HEK293T (cell line): ENCODE measurements at regions of chr3 and their contacts with region 1.

Region 1: DNA sequence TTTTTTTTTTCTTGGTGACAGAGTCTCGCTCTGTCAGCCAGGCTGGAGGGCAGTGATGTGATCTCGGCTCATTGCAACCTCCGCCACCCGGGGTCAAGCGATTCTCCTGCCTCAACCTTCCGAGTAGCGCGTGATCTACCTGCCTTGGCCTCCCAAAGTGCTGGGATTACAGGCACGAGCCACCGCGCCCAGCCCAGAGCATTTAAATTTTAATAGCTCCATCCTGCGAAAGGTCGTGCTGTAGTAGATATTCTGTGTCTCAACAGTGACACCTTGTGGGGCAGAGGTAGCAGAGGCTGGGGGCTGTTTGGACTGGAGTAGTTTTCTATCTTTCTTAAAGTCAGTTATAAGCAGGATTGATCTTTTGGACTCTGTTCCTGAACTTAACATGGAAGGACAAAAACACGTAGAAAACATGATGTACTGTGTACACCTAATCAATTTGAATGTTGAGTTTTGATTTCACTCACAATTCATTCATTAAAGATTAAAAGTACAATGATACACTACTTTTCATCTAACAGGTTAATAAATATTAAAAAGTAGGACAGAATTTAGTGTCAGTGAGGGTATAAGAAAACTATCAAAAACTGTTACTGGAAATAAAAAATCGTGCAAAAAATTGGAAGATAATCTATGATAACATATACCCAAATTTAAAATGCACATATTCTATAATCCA is 11.0 kb upstream of the PDCD6IP start:
- DNase-seq: peak; percentile 66

Region 2: GRCh38 chr3:33629219-33629618 is 158.2 kb before region 1 on chr3:
- CTCF ChIA-PET with region 1: interaction called, 14 read pairs
- POLR2A ChIA-PET with region 1: interaction called, 4 read pairs
- DNase-seq: no peak

Region 3: GRCh38 chr3:33645060-33645647 is 142.3 kb before region 1 on chr3:
- CTCF ChIA-PET with region 1: interaction called, 10 read pairs
- POLR2A ChIA-PET with region 1: no interaction called
- DNase-seq: peak; percentile 56

Region 4: GRCh38 chr3:33798411-33799201 is 11.1 kb after region 1 on chr3 and contains the start of gene PDCD6IP:
- CTCF ChIA-PET with region 1: interaction called, 16 read pairs
- POLR2A ChIA-PET with region 1: interaction called, 15 read pairs
- DNase-seq: peak; percentile 94

Region 5: DNA sequence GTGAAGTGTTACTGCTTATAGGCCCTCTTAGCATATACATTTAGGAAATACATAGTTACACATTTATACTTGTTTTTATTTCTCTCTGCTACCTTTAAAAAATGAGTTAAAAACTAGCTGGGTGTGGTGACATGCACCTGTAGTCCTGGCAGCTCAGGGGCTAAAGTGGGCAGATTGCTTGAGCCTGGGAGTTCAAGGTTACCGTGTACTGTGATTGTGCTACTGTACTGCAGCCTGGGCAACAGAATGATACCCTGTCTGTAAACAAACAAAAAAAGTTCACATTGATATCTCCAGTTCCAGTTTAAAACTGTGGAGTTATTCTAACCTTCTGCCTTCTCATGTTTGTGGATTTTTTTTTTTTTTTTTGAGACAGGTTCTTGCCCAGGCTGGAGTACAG is 23.1 kb after region 1 on chr3:
- CTCF ChIA-PET with region 1: no interaction called
- POLR2A ChIA-PET with region 1: no interaction called
- DNase-seq: no peak